Heart right ventricle (tissue), 16 donors: ENCODE measurements at regions of chr9 and their contacts with region 1.

Region 1: DNA sequence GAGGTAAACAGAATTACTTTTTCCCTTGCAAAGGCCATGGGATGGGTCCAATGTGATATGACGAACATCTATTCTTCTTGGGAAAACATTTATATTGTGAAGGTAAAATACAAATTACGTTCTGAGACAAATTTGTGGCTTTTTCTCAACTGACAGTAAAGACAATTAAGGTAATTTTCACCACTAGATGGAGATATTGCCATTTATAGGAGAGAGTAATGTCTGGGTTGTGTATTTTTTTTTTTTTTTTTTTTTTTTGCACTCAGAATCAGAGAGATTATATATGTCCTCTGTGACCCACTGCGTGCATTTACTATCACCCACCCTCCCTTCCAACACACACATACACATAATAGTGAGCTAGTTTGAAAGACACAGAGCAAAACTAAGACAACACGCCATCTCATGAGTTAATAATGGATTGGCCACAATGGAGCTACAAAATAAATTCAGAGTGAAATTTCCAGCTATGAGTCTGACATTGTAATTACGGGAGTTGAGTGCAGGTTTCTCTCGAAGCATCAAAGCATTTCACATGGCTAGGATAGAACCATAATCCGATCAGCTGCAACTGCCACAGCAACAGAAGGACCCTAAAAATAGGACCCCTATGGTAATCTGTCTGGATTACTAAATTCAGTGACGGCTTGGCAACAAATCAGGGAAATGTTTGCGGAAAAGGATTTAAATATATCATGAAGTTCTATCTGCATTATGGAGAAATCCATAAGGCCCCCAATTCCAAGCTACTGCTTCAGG is 49.2 kb downstream of the ANXA1 start:
- DNase-seq: no peak
- ATAC-seq: peak in 1 of 8 donors; percentile 22
- H3K4me3 ChIP-seq: no peak overlapping the region
- H3K27ac ChIP-seq: no peak overlapping the region
- H3K4me1 ChIP-seq: peaks cover 0 to 16% (median 0%) of the 10 kb centered on the region in 9 donors
- H3K27me3 ChIP-seq: peaks cover 0 to 27% (median 0%) of the 10 kb centered on the region in 7 donors
- CTCF ChIP-seq: peak; percentile 28 to 68 (median 51)

Region 2: GRCh38 chr9:73565833-73566465 is 365.1 kb after region 1 on chr9:
- intact Hi-C with region 1: loop called in 1 of 10 experiments (anchors 10 kb)
- DNase-seq: peak in 1 of 2 donors; percentile 14
- ATAC-seq: peak in 2 of 8 donors; percentile 33 to 55
- H3K4me3 ChIP-seq: no peak overlapping the region
- H3K27ac ChIP-seq: no peak overlapping the region
- H3K4me1 ChIP-seq: no peaks in the 10 kb centered on the region
- H3K27me3 ChIP-seq: no peaks in the 10 kb centered on the region
- CTCF ChIP-seq: peak; percentile 13 to 68 (median 52)

Region 3: DNA sequence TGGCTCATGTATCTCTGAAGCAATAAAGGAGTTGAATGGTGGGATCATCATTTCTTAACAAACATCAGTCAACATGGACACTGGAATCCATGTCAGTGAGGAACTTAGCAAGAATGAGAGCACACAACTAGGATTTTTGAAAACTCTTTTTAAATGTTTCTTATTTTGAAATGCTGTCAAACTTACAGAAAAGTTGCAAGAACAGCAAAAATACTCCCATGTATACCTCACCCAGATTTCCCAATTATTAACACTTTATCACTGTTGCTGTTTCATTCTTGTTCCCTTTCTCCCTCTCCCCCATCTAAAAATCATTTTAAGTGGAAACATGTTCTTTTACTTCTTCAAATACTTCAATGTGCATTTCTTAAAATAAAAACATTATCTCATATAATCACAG is 1361.7 kb after region 1 on chr9:
- intact Hi-C with region 1: loop called in 1 of 10 experiments (anchors 10 kb)
- DNase-seq: no peak
- ATAC-seq: no peak
- H3K4me3 ChIP-seq: no peak overlapping the region
- H3K27ac ChIP-seq: no peak overlapping the region
- H3K4me1 ChIP-seq: peaks cover 0 to under 1% (median 0%) of the 10 kb centered on the region in 9 donors
- H3K27me3 ChIP-seq: no peaks in the 10 kb centered on the region
- CTCF ChIP-seq: no peak

Region 4: DNA sequence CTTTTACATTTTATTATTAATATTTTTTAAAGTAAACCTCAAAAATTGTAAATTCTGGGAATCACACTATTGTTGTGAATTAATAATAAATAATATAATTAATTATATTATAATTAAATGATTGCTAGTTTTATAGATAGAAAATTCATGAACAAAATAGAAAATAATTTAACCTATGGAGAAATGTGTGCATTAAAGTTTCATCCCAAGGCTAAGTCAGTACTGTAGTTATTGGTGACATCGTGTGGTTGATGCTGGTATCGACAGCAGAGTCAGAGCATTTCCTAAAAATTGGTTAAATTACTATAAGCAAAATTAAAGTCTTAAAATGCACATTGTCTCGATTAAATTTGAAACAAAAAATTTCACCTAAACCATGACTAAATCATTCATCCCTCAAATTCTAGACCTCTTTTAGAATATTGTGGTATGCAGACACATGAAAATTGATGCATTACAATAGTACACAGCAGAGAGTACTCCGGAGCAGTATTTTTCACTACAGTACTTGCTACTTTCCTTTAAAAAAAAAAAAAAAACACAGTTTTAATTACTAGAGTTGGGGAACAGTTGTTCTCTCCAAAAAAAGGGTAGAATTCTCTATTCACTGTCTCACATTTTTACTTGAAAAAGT is 1370.1 kb after region 1 on chr9:
- intact Hi-C with region 1: loop called in 3 of 10 experiments (anchors 5 to 10 kb)
- DNase-seq: no peak
- ATAC-seq: no peak
- H3K4me3 ChIP-seq: no peak overlapping the region
- H3K27ac ChIP-seq: no peak overlapping the region
- H3K4me1 ChIP-seq: peaks cover 0 to 4% (median 0%) of the 10 kb centered on the region in 9 donors
- H3K27me3 ChIP-seq: no peaks in the 10 kb centered on the region
- CTCF ChIP-seq: peak; percentile 41 to 72 (median 61)

Region 5: GRCh38 chr9:74742792-74743730 is 1542.2 kb after region 1 on chr9:
- intact Hi-C with region 1: loop called in 2 of 10 experiments (anchors 5 to 10 kb)
- DNase-seq: no peak
- ATAC-seq: peak in 1 of 8 donors; percentile 38
- H3K4me3 ChIP-seq: no peak overlapping the region
- H3K27ac ChIP-seq: no peak overlapping the region
- H3K4me1 ChIP-seq: no peaks in the 10 kb centered on the region
- H3K27me3 ChIP-seq: peaks cover 0 to 17% (median 8%) of the 10 kb centered on the region in 7 donors
- CTCF ChIP-seq: peak; percentile 19 to 75 (median 63)